CD8-positive, alpha-beta T cell (primary cell): ENCODE measurements at regions of chr6 and their contacts with region 1.

Region 1: DNA sequence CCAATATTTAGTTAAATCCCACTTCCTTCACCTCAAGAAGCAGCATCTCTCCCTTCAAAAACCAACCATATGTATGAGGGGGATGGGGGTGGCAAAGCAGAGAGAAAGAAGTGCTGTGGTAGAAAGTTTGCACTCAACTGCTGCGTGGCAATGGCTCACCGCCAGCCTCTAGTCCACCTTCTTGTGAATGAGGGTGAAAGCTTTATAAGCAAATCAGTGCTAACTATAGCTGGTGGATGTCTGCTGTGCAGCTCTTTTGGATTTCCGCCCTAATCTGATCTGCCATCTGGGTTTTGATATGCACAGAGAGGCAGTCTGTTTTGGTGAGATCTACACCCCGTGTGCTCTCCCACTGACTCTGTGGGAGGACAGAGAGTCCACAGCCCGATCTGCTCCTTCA is 281.2 kb upstream of the SUPT3H start:
- DNase-seq: peak in 1 of 9 experiments; percentile 24
- ATAC-seq: no peak
- H3K4me3 ChIP-seq: no peak overlapping the region
- H3K4me3 Mint-ChIP-seq: no peak overlapping the region
- H3K27ac ChIP-seq: no peak overlapping the region
- H3K27ac Mint-ChIP-seq: no peak overlapping the region
- H3K4me1 ChIP-seq: peaks cover 6% of the 10 kb centered on the region
- H3K4me1 Mint-ChIP-seq: peaks cover 18% of the 10 kb centered on the region
- H3K27me3 ChIP-seq: peaks cover 0 to 4% of the 10 kb centered on the region in 2 experiments
- H3K27me3 Mint-ChIP-seq: peaks cover 12% of the 10 kb centered on the region
- CTCF ChIP-seq: no peak

Region 2: GRCh38 chr6:45445749-45446549 is 213.0 kb before region 1 on chr6:
- CTCF ChIA-PET with region 1: no interaction called
- POLR2A ChIA-PET with region 1: no interaction called
- intact Hi-C with region 1: no loop called
- DNase-seq: peak in 4 of 9 experiments; percentile 6 to 50 (median 38)
- ATAC-seq: peak; percentile 36
- H3K4me3 ChIP-seq: no peak overlapping the region
- H3K4me3 Mint-ChIP-seq: no peak overlapping the region
- H3K27ac ChIP-seq: no peak overlapping the region
- H3K27ac Mint-ChIP-seq: peak overlapping the region; percentile 38
- H3K4me1 ChIP-seq: peaks cover 15% of the 10 kb centered on the region
- H3K4me1 Mint-ChIP-seq: peaks cover 66% of the 10 kb centered on the region
- H3K27me3 ChIP-seq: no peaks in the 10 kb centered on the region
- H3K27me3 Mint-ChIP-seq: no peaks in the 10 kb centered on the region
- CTCF ChIP-seq: no peak

Region 3: DNA sequence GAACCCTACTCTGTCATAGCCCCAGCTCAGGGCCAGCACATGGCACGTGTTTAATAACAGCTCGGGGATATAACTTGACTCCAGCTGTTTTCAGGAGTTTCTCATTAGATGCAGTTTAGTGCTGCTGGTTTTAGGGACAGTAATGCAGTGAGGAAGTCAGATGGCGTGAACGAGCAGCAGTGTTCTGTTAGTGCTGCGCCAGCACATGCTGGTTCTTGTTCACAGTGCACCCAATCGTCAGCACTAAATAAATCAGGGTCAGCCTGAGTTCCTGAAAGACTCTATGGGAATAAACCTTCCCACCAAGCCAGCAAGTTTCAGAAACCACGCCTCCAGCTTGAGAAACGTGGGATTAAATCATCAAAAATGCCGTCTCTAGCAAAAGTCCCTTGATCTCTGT is 45.3 kb before region 1 on chr6:
- CTCF ChIA-PET with region 1: no interaction called
- POLR2A ChIA-PET with region 1: no interaction called
- intact Hi-C with region 1: loop called in 1 of 2 experiments (anchors 1 kb)
- DNase-seq: no peak
- ATAC-seq: no peak
- H3K4me3 ChIP-seq: no peak overlapping the region
- H3K4me3 Mint-ChIP-seq: no peak overlapping the region
- H3K27ac ChIP-seq: no peak overlapping the region
- H3K27ac Mint-ChIP-seq: no peak overlapping the region
- H3K4me1 ChIP-seq: no peaks in the 10 kb centered on the region
- H3K4me1 Mint-ChIP-seq: peaks cover 2% of the 10 kb centered on the region
- H3K27me3 ChIP-seq: no peaks in the 10 kb centered on the region
- H3K27me3 Mint-ChIP-seq: no peaks in the 10 kb centered on the region
- CTCF ChIP-seq: no peak